Common myeloid progenitor, CD34-positive (primary cell): ENCODE measurements at regions of chr6 and their contacts with region 1.

Region 1: GRCh38 chr6:110682460-110682853 is 132.8 kb downstream of the CDK19 start:
- DNase-seq: peak; percentile 95 to 98 (median 98)
- H3K4me3 ChIP-seq: no peak overlapping the region
- H3K27ac ChIP-seq: peak overlapping the region in 1 of 2 experiments; percentile 47
- H3K4me1 ChIP-seq: peaks cover 6 to 26% (median 14%) of the 10 kb centered on the region in 4 experiments
- H3K27me3 ChIP-seq: no peaks in the 10 kb centered on the region

Region 2: GRCh38 chr6:110528101-110528929 is 154.1 kb before region 1 on chr6:
- CTCF ChIA-PET with region 1: interaction called, 12 read pairs
- POLR2A ChIA-PET with region 1: no interaction called
- DNase-seq: peak; percentile 67 to 88 (median 82)
- H3K4me3 ChIP-seq: no peak overlapping the region
- H3K27ac ChIP-seq: peak overlapping the region in 1 of 2 experiments; percentile 70
- H3K4me1 ChIP-seq: peaks cover 10 to 22% (median 17%) of the 10 kb centered on the region in 4 experiments
- H3K27me3 ChIP-seq: no peaks in the 10 kb centered on the region

Region 3: DNA sequence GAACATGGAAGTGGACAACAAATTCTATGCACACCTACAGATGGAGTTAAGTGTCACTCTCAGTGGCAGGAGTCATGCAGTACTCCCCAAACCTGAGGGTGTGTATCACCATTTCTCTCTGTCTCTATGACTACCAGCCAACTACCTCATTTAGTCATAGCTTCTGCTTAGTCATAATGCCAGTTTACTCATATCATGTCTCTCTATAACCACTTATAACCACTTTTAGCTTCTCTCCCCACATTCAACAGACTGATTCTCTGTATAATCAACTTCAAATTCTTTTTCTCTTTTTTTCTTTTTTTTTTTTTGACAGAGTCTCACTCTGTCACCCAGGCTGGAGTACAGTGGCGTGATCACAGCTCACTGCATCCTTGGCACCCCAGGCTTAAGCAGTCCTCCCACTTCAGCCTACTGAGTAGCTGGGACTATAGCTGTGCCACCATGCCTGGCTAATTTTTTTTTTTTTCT is 262.3 kb after region 1 on chr6:
- CTCF ChIA-PET with region 1: interaction called, 21 read pairs
- POLR2A ChIA-PET with region 1: interaction called, 4 read pairs
- DNase-seq: peak; percentile 92 to 99 (median 98)
- H3K4me3 ChIP-seq: peak overlapping the region in 2 of 7 experiments; percentile 23 to 24
- H3K27ac ChIP-seq: peak overlapping the region; percentile 82 to 93
- H3K4me1 ChIP-seq: peaks cover 7 to 53% (median 28%) of the 10 kb centered on the region in 4 experiments
- H3K27me3 ChIP-seq: no peaks in the 10 kb centered on the region

Region 4: DNA sequence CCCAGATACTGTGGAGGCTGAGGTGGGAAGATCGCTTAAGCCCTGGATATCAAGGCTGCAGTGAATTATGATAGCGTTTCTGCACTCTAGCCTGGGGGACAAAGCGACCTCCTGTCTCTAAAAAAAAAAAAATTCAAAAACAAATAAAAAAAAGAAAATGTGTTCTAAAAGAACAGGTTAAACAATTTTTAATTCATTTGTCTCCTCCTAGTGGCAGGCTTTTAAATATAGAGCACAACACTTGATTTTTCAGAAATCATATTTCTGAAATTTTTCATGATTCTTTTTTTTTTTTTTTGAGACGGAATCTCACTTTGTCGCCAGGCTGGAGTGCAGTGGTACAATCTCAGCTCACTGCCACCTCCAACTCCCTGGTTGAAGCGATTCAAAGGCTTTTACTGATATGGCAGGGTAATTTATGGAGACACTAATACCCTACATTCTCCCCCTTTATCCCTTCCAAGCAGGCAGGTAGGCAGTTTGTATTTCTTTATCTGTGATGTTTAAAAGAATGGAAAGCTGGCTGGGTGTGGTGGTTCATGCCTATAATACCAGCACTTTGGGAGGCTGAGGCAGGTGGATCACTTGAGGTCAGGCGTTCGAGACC is 267.3 kb after region 1 on chr6:
- CTCF ChIA-PET with region 1: interaction called, 21 read pairs
- POLR2A ChIA-PET with region 1: interaction called, 4 read pairs
- DNase-seq: peak; percentile 75 to 85 (median 83)
- H3K4me3 ChIP-seq: peak overlapping the region in 3 of 7 experiments; percentile 27 to 64 (median 40)
- H3K27ac ChIP-seq: peak overlapping the region in 1 of 2 experiments; percentile 61
- H3K4me1 ChIP-seq: peaks cover 0 to 42% (median 20%) of the 10 kb centered on the region in 4 experiments
- H3K27me3 ChIP-seq: no peaks in the 10 kb centered on the region